Activated CD8-positive, alpha-beta T cell treated with anti-CD3 and anti-CD28 coated beads, Interleukin-2, amount 10 ng/mL, durations not matched to agents 7 days and 5 days (primary cell): ENCODE measurements at regions of chr11 and their contacts with region 1.

Region 1: GRCh38 chr11:47578524-47579460 is at the starts of genes KBTBD4 and NDUFS3:
- DNase-seq: peak; percentile 91
- ATAC-seq: peak; percentile 95
- H3K4me3 Mint-ChIP-seq: peak within 1 kb of the TSS; percentile 100
- H3K27ac Mint-ChIP-seq: peak within 1 kb of the TSS; percentile 95
- H3K4me1 Mint-ChIP-seq: peaks cover 33% of the 10 kb centered on the region
- H3K27me3 Mint-ChIP-seq: no peaks in the 10 kb centered on the region
- total RNA-seq, gene KBTBD4: 17.7 to 20.7 TPM
- total RNA-seq, gene NDUFS3: 114 to 121 TPM

Region 2: DNA sequence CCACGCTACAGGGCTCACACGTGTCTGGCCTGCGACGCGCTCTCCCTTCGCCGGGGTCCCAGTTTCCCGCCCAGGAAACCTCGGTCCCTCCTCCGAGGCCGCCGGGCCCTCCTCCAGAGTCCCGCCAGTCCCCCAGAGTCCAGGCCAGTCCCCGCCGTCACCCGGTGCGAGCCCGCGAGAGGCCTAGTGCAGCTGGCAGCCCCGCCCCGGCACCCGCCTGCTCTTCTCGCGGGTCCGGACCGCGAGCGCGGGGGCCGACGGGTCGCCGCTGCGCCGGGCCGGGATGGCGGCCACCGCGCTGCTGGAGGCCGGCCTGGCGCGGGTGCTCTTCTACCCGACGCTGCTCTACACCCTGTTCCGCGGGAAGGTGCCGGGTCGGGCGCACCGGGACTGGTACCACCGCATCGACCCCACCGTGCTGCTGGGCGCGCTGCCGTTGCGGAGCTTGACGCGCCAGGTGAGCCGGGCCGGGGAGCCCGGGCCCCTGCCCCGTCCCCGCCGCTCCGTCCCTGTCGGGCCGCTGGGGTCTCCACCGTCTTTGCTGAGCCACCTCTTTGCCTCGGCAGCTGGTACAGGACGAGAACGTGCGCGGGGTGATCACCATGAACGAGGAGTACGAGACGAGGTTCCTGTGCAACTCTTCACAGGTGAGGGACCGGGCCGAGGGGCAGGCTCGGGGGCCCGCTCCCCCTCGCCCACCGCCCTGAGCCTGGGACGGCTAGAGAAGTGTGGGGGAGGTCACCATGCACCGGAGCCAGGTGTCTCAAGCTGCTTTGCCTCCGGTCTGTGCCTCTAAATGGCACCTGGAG is 13.2 kb before region 1 on chr11 and contains the start of gene PTPMT1:
- CTCF ChIA-PET with region 1: interaction called, 3 read pairs
- POLR2A ChIA-PET with region 1: interaction called, 26 read pairs
- DNase-seq: peak; percentile 74
- ATAC-seq: peak; percentile 95
- H3K4me3 Mint-ChIP-seq: peak within 1 kb of the TSS; percentile 81
- H3K27ac Mint-ChIP-seq: peak within 1 kb of the TSS; percentile 86
- H3K4me1 Mint-ChIP-seq: peaks cover 24% of the 10 kb centered on the region
- H3K27me3 Mint-ChIP-seq: no peaks in the 10 kb centered on the region
- total RNA-seq, gene PTPMT1: 44.5 to 44.7 TPM